Naive thymus-derived CD4-positive, alpha-beta T cell (primary cell): ENCODE measurements at regions of chr4 and their contacts with region 1.

Region 1: DNA sequence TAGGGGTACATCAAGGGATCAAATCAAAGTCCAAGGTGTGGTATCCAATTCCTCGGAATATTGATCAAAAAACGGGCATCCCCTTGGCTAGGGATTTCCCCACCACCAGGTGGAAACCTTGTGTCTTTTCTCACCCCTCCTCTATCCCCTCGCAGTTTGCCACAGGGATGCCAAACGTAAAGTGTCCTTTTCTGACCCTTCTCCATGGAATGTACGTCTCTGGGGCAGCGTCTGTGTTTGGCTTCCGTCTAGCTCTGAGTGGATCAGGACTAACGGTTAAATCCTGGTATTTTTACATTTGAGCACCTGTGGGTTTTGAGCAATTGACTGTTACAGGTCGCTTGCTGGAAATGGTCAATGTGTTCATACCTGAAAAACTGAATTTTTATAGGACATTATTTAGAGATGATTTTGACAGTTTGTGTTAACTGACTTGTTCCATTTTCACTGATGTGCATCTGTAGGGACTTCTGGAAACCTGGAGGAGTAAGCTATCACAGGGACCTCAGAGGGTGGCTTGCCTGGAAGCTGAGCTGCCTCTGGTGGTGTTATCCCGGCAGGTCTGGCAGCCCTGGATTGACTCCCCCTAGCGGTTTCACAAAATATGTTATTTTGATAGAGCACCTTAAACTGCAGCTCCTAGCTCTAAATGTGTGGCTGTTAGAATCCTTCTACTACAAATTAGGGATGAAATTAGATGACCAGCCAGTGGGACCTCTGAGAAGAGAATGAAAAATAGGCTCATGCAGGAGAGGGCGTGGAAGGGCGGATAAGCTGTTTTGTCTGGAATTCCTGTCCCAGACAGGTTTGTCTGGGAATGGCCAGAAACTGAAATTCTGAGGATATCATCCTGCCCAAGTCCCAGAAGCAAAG is 8.8 kb upstream of the MGST2 start:
- DNase-seq: peak in 8 of 9 donors; percentile 29 to 67 (median 56)
- ATAC-seq: peak; percentile 87
- H3K4me3 ChIP-seq: no peak overlapping the region
- H3K4me3 Mint-ChIP-seq: peak overlapping the region in 8 of 10 donors; percentile 5 to 86 (median 22)
- H3K27ac ChIP-seq: no peak overlapping the region
- H3K27ac Mint-ChIP-seq: peak overlapping the region in 5 of 9 donors; percentile 31 to 98 (median 87)
- H3K4me1 ChIP-seq: peaks cover 0 to 5% of the 10 kb centered on the region in 2 donors
- H3K4me1 Mint-ChIP-seq: peaks cover 17 to 41% (median 18%) of the 10 kb centered on the region in 7 donors
- H3K27me3 ChIP-seq: no peaks in the 10 kb centered on the region
- H3K27me3 Mint-ChIP-seq: peaks cover 0 to 5% (median 5%) of the 10 kb centered on the region in 5 donors

Region 2: GRCh38 chr4:139015269-139015947 is 641.4 kb before region 1 on chr4 and contains the start of gene NOCT:
- CTCF ChIA-PET with region 1: no interaction called
- POLR2A ChIA-PET with region 1: no interaction called
- intact Hi-C with region 1: loop called (anchors 5 kb)
- DNase-seq: peak; percentile 82 to 92 (median 89)
- ATAC-seq: peak; percentile 94
- H3K4me3 ChIP-seq: peak within 1 kb of the TSS; percentile 65
- H3K4me3 Mint-ChIP-seq: peak within 1 kb of the TSS; percentile 82 to 93 (median 88)
- H3K27ac ChIP-seq: peak within 1 kb of the TSS; percentile 91
- H3K27ac Mint-ChIP-seq: peak within 1 kb of the TSS; percentile 76 to 99 (median 94)
- H3K4me1 ChIP-seq: peaks cover 7 to 10% of the 10 kb centered on the region in 2 donors
- H3K4me1 Mint-ChIP-seq: peaks cover 14 to 44% (median 24%) of the 10 kb centered on the region in 7 donors
- H3K27me3 ChIP-seq: no peaks in the 10 kb centered on the region
- H3K27me3 Mint-ChIP-seq: no peaks in the 10 kb centered on the region
- total RNA-seq, gene NOCT: 1.6 to 33.7 (median 8.8) TPM

Region 3: GRCh38 chr4:139704915-139705485 is 48.1 kb after region 1 on chr4:
- CTCF ChIA-PET with region 1: no interaction called
- POLR2A ChIA-PET with region 1: no interaction called
- intact Hi-C with region 1: loop called in 1 of 2 experiments (anchors 5 kb)
- DNase-seq: no peak
- ATAC-seq: no peak
- H3K4me3 ChIP-seq: no peak overlapping the region
- H3K4me3 Mint-ChIP-seq: no peak overlapping the region
- H3K27ac ChIP-seq: no peak overlapping the region
- H3K27ac Mint-ChIP-seq: no peak overlapping the region
- H3K4me1 ChIP-seq: no peaks in the 10 kb centered on the region
- H3K4me1 Mint-ChIP-seq: peaks cover 0 to 2% (median 0%) of the 10 kb centered on the region in 7 donors
- H3K27me3 ChIP-seq: no peaks in the 10 kb centered on the region
- H3K27me3 Mint-ChIP-seq: peaks cover 0 to 10% (median 0%) of the 10 kb centered on the region in 5 donors

Region 4: GRCh38 chr4:140012688-140013486 is 356.0 kb after region 1 on chr4:
- CTCF ChIA-PET with region 1: no interaction called
- POLR2A ChIA-PET with region 1: no interaction called
- intact Hi-C with region 1: loop called (anchors 1 to 10 kb)
- DNase-seq: peak; percentile 7 to 77 (median 66)
- ATAC-seq: peak; percentile 94
- H3K4me3 ChIP-seq: no peak overlapping the region
- H3K4me3 Mint-ChIP-seq: peak overlapping the region in 1 of 10 donors; percentile 1
- H3K27ac ChIP-seq: no peak overlapping the region
- H3K27ac Mint-ChIP-seq: peak overlapping the region in 1 of 9 donors; percentile 11
- H3K4me1 ChIP-seq: no peaks in the 10 kb centered on the region
- H3K4me1 Mint-ChIP-seq: peaks cover 5 to 9% (median 8%) of the 10 kb centered on the region in 7 donors
- H3K27me3 ChIP-seq: no peaks in the 10 kb centered on the region
- H3K27me3 Mint-ChIP-seq: peaks cover 0 to 39% (median 0%) of the 10 kb centered on the region in 5 donors

Region 5: DNA sequence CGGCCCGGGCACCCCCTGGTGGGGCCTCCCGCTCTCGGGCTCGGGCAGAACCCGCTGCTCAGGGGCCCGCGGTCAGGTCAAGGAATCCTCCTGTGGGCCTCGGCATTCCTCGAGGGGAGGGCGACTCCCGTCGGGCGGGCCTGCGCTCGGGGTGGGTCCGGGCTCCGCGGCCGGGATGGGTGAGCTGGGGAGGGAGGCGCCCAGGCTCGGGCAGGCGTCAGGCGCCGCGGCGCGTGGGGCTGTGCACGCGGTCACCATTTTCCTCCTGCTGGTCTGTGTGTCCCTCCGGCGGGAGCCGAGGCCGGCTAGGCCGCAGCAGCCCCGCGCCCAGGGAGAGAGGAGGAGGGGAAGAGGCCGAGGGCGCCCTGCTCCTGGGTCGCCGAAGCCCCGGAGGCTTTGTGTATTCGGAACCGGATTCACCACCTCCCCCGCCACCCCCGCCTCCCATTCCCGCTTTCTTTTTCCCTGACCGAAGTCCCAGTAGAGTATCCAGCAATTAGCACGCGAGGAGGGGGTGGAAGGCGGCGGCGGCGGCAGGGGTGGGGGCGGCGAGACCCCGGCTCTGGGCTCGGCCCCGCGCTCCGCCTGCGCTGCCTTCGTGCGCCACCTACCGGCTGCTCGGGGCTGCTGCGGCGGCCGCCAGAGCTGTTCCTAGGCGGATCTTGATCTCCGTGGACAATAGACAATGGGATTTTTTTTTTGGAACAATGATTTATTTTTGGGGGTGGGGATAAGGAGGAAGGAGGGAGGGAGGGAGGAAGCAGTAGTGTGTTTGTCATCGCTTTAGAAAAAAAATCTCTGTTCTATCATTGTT is 596.1 kb after region 1 on chr4:
- CTCF ChIA-PET with region 1: no interaction called
- POLR2A ChIA-PET with region 1: no interaction called
- intact Hi-C with region 1: loop called (anchors 1 to 2 kb)
- DNase-seq: peak; percentile 29 to 78 (median 60)
- ATAC-seq: peak; percentile 78
- H3K4me3 ChIP-seq: peak overlapping the region; percentile 44
- H3K4me3 Mint-ChIP-seq: peak overlapping the region; percentile 42 to 85 (median 80)
- H3K27ac ChIP-seq: peak overlapping the region; percentile 29
- H3K27ac Mint-ChIP-seq: peak overlapping the region in 2 of 9 donors; percentile 30 to 33
- H3K4me1 ChIP-seq: no peaks in the 10 kb centered on the region
- H3K4me1 Mint-ChIP-seq: peaks cover 2 to 31% (median 11%) of the 10 kb centered on the region in 7 donors
- H3K27me3 ChIP-seq: peaks cover 0 to 7% of the 10 kb centered on the region in 2 donors
- H3K27me3 Mint-ChIP-seq: peaks cover 0 to 19% (median 3%) of the 10 kb centered on the region in 5 donors

Region 6: DNA sequence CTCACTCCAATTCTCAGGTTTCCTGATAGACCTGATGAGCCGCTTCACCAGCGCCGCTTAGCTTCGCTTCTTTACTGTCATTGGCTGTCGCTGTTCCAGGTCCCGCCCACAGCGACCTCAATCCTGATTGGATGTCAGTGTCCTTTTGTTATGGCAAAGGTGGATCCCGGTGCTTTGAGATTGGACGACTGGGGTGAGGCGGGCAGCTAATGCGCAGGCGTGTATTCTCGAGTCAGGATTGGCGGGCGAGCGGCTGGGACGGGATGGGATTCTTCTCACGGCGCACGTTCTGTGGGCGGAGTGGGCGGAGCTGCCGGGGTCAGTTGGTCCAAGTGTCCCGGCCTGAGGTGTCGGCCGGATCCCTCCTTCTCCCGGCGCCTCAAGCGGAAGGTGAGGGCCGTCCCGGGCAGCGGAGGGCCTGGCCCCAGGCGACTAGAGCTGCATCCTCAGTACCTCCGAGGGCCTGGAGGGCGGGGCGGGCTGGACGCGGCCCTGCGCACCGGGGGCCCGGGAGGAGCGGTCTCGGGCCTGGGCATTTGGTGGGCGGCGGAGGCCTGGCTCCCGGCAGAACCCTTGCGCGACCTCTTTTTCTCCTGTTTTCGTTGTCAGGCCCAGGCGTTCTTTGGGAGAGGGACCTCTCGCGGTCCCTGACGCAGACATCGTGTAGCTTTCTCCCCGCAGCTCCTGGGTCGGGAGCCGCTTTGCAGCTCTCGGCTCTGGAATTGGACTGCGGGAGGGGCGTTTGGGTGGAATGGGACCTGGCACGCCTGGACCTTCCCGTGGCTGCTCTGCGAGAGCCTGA is 716.7 kb after region 1 on chr4 and contains the start of gene SCOC:
- CTCF ChIA-PET with region 1: no interaction called
- POLR2A ChIA-PET with region 1: no interaction called
- intact Hi-C with region 1: loop called in 1 of 2 experiments (anchors 5 kb)
- DNase-seq: peak; percentile 80 to 98 (median 95)
- ATAC-seq: peak; percentile 98
- H3K4me3 ChIP-seq: peak within 1 kb of the TSS; percentile 79
- H3K4me3 Mint-ChIP-seq: peak within 1 kb of the TSS in 2 of 10 donors; percentile 87 to 90
- H3K27ac ChIP-seq: peak within 1 kb of the TSS; percentile 86
- H3K27ac Mint-ChIP-seq: peak within 1 kb of the TSS in 5 of 9 donors; percentile 47 to 90 (median 51)
- H3K4me1 ChIP-seq: peaks cover 6 to 7% of the 10 kb centered on the region in 2 donors
- H3K4me1 Mint-ChIP-seq: peaks cover 29 to 49% (median 43%) of the 10 kb centered on the region in 7 donors
- H3K27me3 ChIP-seq: no peaks in the 10 kb centered on the region
- H3K27me3 Mint-ChIP-seq: peaks cover 0 to 17% (median 0%) of the 10 kb centered on the region in 5 donors
- total RNA-seq, gene SCOC: 9.3 to 26.3 (median 22.6) TPM